ENCODE measurements at regions of chr3 and their contacts with region 1.

Region 1: DNA sequence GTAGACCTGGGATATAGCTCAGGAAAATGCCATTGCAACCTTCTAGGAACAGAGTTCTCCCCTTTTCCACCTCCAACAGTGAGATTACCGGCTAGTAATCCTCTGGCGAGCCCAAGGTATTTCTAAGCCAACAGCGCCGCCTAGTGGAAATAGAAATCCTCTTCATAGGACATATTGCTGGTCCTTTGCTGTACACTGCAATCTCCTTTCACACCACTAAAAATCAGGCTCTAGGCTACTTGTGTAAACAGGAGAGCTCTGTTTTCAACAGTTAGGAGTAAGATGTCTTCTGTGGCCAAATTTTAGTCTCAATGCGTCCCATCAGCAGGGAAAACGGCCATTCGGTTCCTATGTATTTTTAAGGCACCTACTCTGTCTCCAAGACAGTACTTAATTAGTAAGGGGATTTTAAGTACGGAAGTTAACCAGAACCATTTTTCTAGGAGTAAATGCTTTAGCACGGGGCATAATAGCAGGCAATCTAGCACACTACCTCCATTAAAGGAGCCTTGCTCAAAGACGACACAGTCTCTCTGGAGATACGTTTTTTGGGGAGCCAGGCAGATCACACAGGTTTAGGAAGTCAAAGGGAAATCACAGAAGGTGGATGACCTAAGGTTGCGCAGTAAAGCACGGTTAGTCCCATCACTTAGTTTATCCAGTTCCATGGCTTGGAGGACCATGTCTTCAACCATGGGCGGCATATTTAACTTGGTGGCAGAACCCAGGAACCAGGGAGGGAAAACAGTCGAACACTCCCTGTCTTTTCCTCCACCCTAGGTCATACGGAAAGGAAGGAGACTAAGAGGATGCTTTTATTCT is 43.8 kb downstream of the NCEH1 start:
- DNase-seq: peak; percentile 86
- H3K4me3 ChIP-seq: no peak overlapping the region
- H3K27ac ChIP-seq: peak overlapping the region in 1 of 4 donors; percentile 20
- H3K4me1 ChIP-seq: peaks cover 0 to 5% (median 2%) of the 10 kb centered on the region in 4 donors
- H3K27me3 ChIP-seq: no peaks in the 10 kb centered on the region
- CTCF ChIP-seq: peak; percentile 80 to 96 (median 88)
- EP300 ChIP-seq: no peak
- POLR2A ChIP-seq: no peak

Region 2: DNA sequence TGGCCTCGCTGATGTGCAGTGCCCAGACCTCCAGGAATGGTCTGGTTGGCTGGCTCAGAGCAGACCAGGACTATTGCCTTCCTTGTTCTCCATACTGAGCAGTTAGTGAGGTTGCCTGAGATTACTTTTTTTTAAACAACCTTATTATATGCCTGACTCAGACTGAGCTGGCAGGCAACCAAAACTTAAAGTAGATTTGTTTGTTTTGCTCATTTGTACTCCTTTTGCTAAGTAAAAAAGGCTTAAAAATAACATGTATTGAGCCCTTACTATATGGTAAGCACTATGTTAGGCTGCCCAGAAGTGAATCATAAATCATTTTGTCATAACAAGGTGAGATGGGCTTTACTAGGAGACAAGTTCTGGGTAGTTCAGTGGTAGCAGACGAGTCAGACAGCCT is 311.2 kb before region 1 on chr3:
- in situ Hi-C with region 1: loop called in 2 of 4 experiments (anchors 25 kb)
- intact Hi-C with region 1: no loop called
- DNase-seq: peak; percentile 24
- H3K4me3 ChIP-seq: no peak overlapping the region
- H3K27ac ChIP-seq: no peak overlapping the region
- H3K4me1 ChIP-seq: peaks cover 0 to 11% (median 7%) of the 10 kb centered on the region in 4 donors
- H3K27me3 ChIP-seq: no peaks in the 10 kb centered on the region
- CTCF ChIP-seq: no peak
- EP300 ChIP-seq: no peak
- POLR2A ChIP-seq: no peak

Measured in transverse colon (tissue), 4 donors.